ENCODE measurements at regions of chr9 and their contacts with region 1.

Region 1: DNA sequence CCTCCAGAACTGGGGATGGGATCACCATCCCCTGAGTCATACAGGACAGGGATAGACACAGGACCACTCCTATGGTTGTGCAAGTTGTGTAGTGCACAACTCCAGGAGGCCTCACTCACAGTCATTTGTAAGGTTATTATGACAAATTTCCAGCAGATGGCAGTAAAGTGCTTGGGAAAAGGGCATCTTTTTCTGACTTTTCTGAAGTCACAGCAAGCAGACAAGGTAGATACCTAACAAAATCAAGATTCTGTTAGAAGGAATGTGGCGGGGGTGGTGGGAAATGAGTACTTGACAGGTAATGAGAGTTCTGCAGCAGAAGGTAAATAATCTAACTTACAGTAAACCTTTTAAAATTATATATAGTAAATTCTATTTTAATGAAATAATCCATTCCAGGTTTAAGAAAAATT is 16.7 kb upstream of the KIF27 start:
- DNase-seq: peak in 2 of 4 donors; percentile 55 to 61
- ATAC-seq: peak; percentile 67
- H3K4me3 ChIP-seq: no peak overlapping the region
- H3K27ac ChIP-seq: no peak overlapping the region
- H3K4me1 ChIP-seq: peaks cover 9 to 33% of the 10 kb centered on the region in 2 donors
- H3K27me3 ChIP-seq: no peaks in the 10 kb centered on the region
- CTCF ChIP-seq: peak; percentile 65 to 72

Region 2: DNA sequence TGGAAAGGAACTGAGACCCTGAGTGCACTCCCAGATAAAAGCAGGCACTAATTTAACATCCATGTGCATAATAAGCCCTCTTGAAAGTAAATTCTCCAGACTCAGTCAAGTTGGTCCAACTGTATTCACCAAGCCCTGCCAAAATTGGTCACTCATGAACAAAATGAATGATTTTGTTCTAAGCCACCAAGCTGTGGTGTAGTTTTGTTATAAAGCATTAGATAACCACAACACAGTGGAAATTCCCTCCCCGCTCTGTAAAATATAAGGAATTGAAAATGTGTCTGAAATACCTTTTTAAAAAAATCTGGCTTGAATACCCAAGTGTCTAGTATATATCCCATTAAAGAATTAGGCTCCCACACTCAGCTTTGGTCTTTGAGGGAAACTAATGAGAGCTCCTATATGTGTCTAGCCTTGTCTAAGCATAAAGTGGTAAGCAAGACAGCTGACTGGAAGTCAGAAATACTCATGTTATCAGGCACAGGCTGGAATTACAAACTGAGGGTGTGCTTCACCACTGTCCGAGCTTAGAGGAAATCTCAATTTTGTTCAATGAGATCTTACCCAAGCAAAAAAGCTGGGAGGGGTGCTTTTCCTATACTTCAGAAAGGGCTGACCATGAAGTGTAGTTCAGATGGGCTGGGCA is 281.8 kb before region 1 on chr9:
- intact Hi-C with region 1: no loop called
- DNase-seq: no peak
- ATAC-seq: no peak
- H3K4me3 ChIP-seq: no peak overlapping the region
- H3K27ac ChIP-seq: no peak overlapping the region
- H3K4me1 ChIP-seq: no peaks in the 10 kb centered on the region
- H3K27me3 ChIP-seq: no peaks in the 10 kb centered on the region
- CTCF ChIP-seq: no peak

Region 3: GRCh38 chr9:84261082-84261746 is 323.3 kb after region 1 on chr9:
- intact Hi-C with region 1: loop called in 1 of 2 experiments (anchors 5 kb)
- DNase-seq: peak; percentile 70 to 89 (median 82)
- ATAC-seq: peak; percentile 100
- H3K4me3 ChIP-seq: no peak overlapping the region
- H3K27ac ChIP-seq: no peak overlapping the region
- H3K4me1 ChIP-seq: no peaks in the 10 kb centered on the region
- H3K27me3 ChIP-seq: no peaks in the 10 kb centered on the region
- CTCF ChIP-seq: peak; percentile 84 to 91

Region 4: DNA sequence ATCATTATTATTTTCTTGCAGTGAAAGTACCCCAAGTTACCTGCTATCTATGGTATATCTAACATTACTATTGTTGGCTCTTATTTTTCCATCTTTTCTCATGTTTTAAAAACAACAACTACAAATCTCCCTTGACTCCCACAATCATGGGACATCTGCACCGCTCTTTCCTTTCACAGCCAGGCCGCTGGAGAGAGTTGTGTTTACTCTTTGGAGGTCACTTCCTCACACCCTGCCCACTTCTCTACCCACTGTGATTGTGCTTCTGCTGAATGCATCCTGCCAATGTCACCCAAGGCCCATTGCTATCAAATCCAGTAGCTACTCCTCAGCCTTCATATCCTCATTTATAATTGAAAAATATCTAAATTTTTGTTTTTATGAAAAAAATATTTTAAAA is 373.0 kb after region 1 on chr9:
- intact Hi-C with region 1: loop called in 1 of 2 experiments (anchors 5 kb)
- DNase-seq: peak in 1 of 4 donors; percentile 5
- ATAC-seq: no peak
- H3K4me3 ChIP-seq: no peak overlapping the region
- H3K27ac ChIP-seq: no peak overlapping the region
- H3K4me1 ChIP-seq: peaks cover 0 to 11% of the 10 kb centered on the region in 2 donors
- H3K27me3 ChIP-seq: no peaks in the 10 kb centered on the region
- CTCF ChIP-seq: no peak